H1 (cell line): ENCODE measurements at regions of chr7 and their contacts with region 1.

Region 1: DNA sequence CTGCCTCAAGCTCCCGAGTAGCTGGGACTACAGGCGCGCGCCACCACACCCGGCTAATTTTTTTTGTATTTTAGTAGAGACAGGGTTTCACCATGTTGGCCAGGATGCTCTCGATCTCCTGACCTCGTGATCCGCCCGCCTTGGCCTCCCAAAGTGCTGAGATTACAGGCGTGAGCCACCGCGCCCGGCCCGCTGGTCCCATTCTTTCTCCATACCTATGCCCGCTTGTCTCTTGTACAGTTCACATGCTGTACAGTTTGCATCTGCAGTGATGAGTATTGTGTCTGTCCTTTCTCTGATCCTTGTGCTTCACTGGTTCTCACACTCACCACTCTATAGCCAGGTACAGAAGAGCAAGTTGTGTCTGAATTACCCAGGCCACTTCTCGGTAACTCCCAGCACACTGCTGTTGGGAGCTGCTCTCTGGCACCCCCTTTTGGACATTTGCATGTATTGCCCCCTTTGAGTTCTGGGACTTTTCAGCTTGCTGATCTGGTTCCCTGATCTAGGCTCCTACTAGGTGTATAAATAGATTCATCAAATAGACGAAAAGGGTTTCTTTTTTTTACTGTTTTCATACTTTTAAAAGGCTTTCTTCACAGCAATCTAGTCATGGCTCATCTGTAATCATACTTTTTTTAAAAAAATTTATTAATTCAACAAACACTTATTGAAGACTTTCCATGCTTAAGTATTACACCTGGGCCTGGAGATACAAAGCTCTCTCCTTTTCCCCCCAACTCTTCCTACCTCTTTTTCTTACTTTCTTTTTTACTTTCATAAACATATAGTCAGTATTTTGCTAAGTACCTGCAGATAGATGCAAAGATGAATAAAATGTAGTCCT is 53.5 kb downstream of the AOAH start:
- DNase-seq: peak in 1 of 2 experiments; percentile 81
- H3K4me3 ChIP-seq: no peak overlapping the region
- H3K27ac ChIP-seq: no peak overlapping the region
- H3K4me1 ChIP-seq: no peaks in the 10 kb centered on the region
- H3K27me3 ChIP-seq: no peaks in the 10 kb centered on the region
- CTCF ChIP-seq: peak; percentile 81 to 93 (median 91)
- EP300 ChIP-seq: no peak
- POLR2A ChIP-seq: no peak
- RAD21 ChIP-seq: peak; percentile 93

Region 2: GRCh38 chr7:36473454-36474282 is 197.1 kb before region 1 on chr7:
- CTCF ChIA-PET with region 1: interaction called, 75 read pairs
- POLR2A ChIA-PET with region 1: no interaction called
- DNase-seq: peak in 1 of 2 experiments; percentile 89
- H3K4me3 ChIP-seq: no peak overlapping the region
- H3K27ac ChIP-seq: no peak overlapping the region
- H3K4me1 ChIP-seq: no peaks in the 10 kb centered on the region
- H3K27me3 ChIP-seq: no peaks in the 10 kb centered on the region
- CTCF ChIP-seq: peak; percentile 57 to 77 (median 71)
- EP300 ChIP-seq: no peak
- POLR2A ChIP-seq: no peak
- RAD21 ChIP-seq: peak; percentile 90 to 93

Region 3: DNA sequence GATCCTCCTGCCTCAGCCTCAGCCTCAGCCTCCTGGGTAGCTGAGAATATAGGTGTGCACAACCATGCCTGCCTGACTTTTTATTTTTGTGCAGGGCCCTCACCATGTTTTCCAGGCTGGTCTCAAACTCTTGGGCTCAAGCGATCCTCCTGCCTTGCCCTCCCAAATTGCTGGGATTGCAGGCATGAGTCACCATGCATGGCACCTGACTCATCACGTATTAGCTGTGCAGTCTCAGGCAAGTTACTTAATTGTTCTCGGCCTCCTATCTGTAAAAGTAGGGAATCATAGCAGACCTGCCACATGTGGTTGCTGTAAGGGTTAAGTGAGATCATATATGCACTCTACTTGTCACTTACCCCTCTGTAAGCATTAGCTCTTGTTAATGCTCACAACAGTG is 164.0 kb before region 1 on chr7:
- CTCF ChIA-PET with region 1: interaction called, 12 read pairs
- POLR2A ChIA-PET with region 1: interaction called, 3 read pairs
- DNase-seq: no peak
- H3K4me3 ChIP-seq: no peak overlapping the region
- H3K27ac ChIP-seq: no peak overlapping the region
- H3K4me1 ChIP-seq: no peaks in the 10 kb centered on the region
- H3K27me3 ChIP-seq: no peaks in the 10 kb centered on the region
- CTCF ChIP-seq: no peak
- EP300 ChIP-seq: no peak
- POLR2A ChIP-seq: no peak
- RAD21 ChIP-seq: no peak

Region 4: DNA sequence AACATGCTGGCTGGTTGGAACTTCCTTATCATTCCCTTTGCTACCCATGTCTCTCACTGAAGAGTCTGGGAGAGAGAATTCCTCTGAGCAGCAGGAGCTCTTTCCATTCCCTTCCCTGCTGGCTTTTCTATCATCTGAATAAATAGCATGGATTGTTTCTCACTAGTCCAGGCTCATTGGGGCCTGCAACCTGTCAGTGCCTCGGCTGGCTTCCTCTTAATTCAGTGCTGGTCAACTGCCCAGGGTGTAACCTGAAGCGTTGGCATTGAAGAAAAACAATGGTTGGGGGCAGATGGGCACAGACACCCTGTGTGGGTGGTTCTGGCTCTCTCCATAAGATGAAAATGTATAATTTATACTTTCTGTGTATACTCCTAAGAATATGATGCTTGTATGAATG is 125.5 kb before region 1 on chr7:
- CTCF ChIA-PET with region 1: interaction called, 12 read pairs
- POLR2A ChIA-PET with region 1: no interaction called
- DNase-seq: no peak
- H3K4me3 ChIP-seq: no peak overlapping the region
- H3K27ac ChIP-seq: no peak overlapping the region
- H3K4me1 ChIP-seq: peaks cover 0 to 4% (median 0%) of the 10 kb centered on the region in 4 experiments; a peak in 2 of 7 replicates
- H3K27me3 ChIP-seq: no peaks in the 10 kb centered on the region
- CTCF ChIP-seq: no peak
- EP300 ChIP-seq: no peak
- POLR2A ChIP-seq: no peak
- RAD21 ChIP-seq: no peak

Region 5: GRCh38 chr7:36627836-36628235 is 43.0 kb before region 1 on chr7:
- CTCF ChIA-PET with region 1: interaction called, 10 read pairs
- POLR2A ChIA-PET with region 1: no interaction called
- DNase-seq: no peak
- H3K4me3 ChIP-seq: no peak overlapping the region
- H3K27ac ChIP-seq: no peak overlapping the region
- H3K4me1 ChIP-seq: peaks cover 0 to 1% (median 1%) of the 10 kb centered on the region in 4 experiments; a peak in 6 of 7 replicates
- H3K27me3 ChIP-seq: no peaks in the 10 kb centered on the region
- CTCF ChIP-seq: no peak
- EP300 ChIP-seq: no peak
- POLR2A ChIP-seq: no peak
- RAD21 ChIP-seq: no peak

Region 6: GRCh38 chr7:36648441-36648840 is 22.4 kb before region 1 on chr7:
- CTCF ChIA-PET with region 1: interaction called, 14 read pairs
- POLR2A ChIA-PET with region 1: no interaction called
- DNase-seq: no peak
- H3K4me3 ChIP-seq: no peak overlapping the region
- H3K27ac ChIP-seq: no peak overlapping the region
- H3K4me1 ChIP-seq: peaks cover 3 to 12% (median 7%) of the 10 kb centered on the region in 4 experiments; a peak in 5 of 7 replicates
- H3K27me3 ChIP-seq: no peaks in the 10 kb centered on the region
- CTCF ChIP-seq: no peak
- EP300 ChIP-seq: no peak
- POLR2A ChIP-seq: no peak
- RAD21 ChIP-seq: no peak

Region 7: DNA sequence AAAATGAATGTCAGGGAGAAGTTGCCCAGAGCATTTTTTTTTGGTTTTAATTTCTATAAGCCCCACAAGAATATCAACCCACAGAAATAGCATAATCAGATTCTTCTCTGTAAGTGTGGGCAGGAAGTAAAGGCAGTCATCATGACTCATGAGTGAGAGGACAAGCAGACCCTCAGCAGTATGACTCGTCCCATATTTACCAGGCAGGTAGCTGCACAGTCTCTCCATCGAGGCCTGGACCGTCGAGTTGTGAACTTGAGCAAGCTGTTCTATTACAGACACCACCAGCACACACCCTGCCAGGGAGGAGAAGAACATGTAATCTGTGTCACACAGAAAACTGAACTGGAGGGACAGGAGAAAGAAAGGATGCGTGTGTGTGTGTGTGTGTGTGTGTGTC is 15.7 kb after region 1 on chr7:
- CTCF ChIA-PET with region 1: interaction called, 40 read pairs
- POLR2A ChIA-PET with region 1: no interaction called
- DNase-seq: no peak
- H3K4me3 ChIP-seq: no peak overlapping the region
- H3K27ac ChIP-seq: no peak overlapping the region
- H3K4me1 ChIP-seq: no peaks in the 10 kb centered on the region
- H3K27me3 ChIP-seq: no peaks in the 10 kb centered on the region
- CTCF ChIP-seq: no peak
- EP300 ChIP-seq: no peak
- POLR2A ChIP-seq: no peak
- RAD21 ChIP-seq: no peak

Region 8: GRCh38 chr7:36742911-36743775 is 72.3 kb after region 1 on chr7:
- CTCF ChIA-PET with region 1: no interaction called
- POLR2A ChIA-PET with region 1: no interaction called
- DNase-seq: no peak
- H3K4me3 ChIP-seq: no peak overlapping the region
- H3K27ac ChIP-seq: no peak overlapping the region
- H3K4me1 ChIP-seq: no peaks in the 10 kb centered on the region
- H3K27me3 ChIP-seq: no peaks in the 10 kb centered on the region
- CTCF ChIP-seq: no peak
- EP300 ChIP-seq: no peak
- POLR2A ChIP-seq: no peak
- RAD21 ChIP-seq: no peak